ENCODE measurements at regions of chr11 and their contacts with region 1.

Region 1: DNA sequence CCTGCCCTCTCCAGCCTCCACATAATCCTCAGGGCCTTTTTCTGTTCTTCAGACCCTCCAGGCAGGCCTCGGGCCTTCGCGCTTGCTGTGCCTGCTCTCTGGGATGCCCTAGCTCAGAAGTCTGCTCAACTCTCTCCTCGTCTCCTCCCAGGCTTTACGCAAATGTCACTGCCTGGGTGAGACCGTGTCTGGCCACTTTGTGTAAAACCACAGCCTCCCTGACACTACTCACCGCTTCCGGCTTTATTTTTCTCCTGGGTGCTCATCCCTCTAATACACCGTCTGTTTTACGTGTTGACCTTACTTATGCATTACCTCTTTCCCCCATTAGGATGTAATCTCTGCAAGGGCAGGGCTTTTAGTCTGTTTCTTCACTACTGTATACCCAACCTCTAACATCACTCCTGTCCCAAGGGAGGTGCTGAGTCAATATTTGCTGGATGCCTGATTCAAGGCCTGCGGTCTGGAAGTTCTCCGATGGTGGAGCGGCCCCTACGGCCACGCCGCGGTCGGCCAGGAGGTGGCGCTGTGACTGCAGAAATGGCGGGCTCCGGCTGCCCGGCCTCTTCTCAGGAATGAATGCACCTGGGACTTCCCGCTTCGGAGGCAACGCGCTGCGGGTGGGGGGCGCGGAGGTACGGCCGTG is 58.2 kb upstream of the THY1 start:
- DNase-seq: peak; percentile 57
- ATAC-seq: peak; percentile 91
- H3K4me3 ChIP-seq: no peak overlapping the region
- H3K27ac ChIP-seq: no peak overlapping the region
- H3K4me1 ChIP-seq: no peaks in the 10 kb centered on the region
- H3K27me3 ChIP-seq: no peaks in the 10 kb centered on the region
- CTCF ChIP-seq: peak; percentile 98

Region 2: GRCh38 chr11:119533921-119534736 is 53.0 kb after region 1 on chr11:
- CTCF ChIA-PET with region 1: interaction called, 4 read pairs
- POLR2A ChIA-PET with region 1: no interaction called
- in situ Hi-C with region 1: no loop called
- intact Hi-C with region 1: loop called (anchors 1 kb)
- DNase-seq: peak; percentile 42
- ATAC-seq: peak; percentile 96
- H3K4me3 ChIP-seq: no peak overlapping the region
- H3K27ac ChIP-seq: no peak overlapping the region
- H3K4me1 ChIP-seq: no peaks in the 10 kb centered on the region
- H3K27me3 ChIP-seq: peaks cover 2% of the 10 kb centered on the region; the same call in 1 of the 2 replicates
- CTCF ChIP-seq: peak; percentile 100

Region 3: GRCh38 chr11:119666463-119667131 is 185.5 kb after region 1 on chr11:
- CTCF ChIA-PET with region 1: interaction called, 4 read pairs
- POLR2A ChIA-PET with region 1: no interaction called
- in situ Hi-C with region 1: no loop called
- intact Hi-C with region 1: loop called (anchors 5 kb)
- DNase-seq: peak; percentile 60
- ATAC-seq: peak; percentile 99
- H3K4me3 ChIP-seq: no peak overlapping the region
- H3K27ac ChIP-seq: no peak overlapping the region
- H3K4me1 ChIP-seq: no peaks in the 10 kb centered on the region
- H3K27me3 ChIP-seq: no peaks in the 10 kb centered on the region
- CTCF ChIP-seq: peak; percentile 97

Region 4: GRCh38 chr11:120013325-120014270 is 532.5 kb after region 1 on chr11:
- CTCF ChIA-PET with region 1: no interaction called
- POLR2A ChIA-PET with region 1: no interaction called
- in situ Hi-C with region 1: no loop called
- intact Hi-C with region 1: loop called (anchors 5 kb)
- DNase-seq: peak; percentile 8
- ATAC-seq: peak; percentile 92
- H3K4me3 ChIP-seq: no peak overlapping the region
- H3K27ac ChIP-seq: no peak overlapping the region
- H3K4me1 ChIP-seq: no peaks in the 10 kb centered on the region
- H3K27me3 ChIP-seq: peaks cover 59% of the 10 kb centered on the region
- CTCF ChIP-seq: peak; percentile 95

Measured in Panc1 (cell line).